Cardiac septum (tissue), 1 donor: ENCODE measurements at regions of chr1 and their contacts with region 1.

Region 1: GRCh38 chr1:164930241-164930640 is 371.3 kb downstream of the PBX1 start:
- DNase-seq: no peak

Region 2: GRCh38 chr1:164977561-164977960 is 47.3 kb after region 1 on chr1:
- intact Hi-C with region 1: loop called (anchors 5 kb)
- DNase-seq: no peak